Activated B cell treated with CpG ODN at 0.5 μM for 24 hours (primary cell): ENCODE measurements at regions of chr12 and their contacts with region 1.

Region 1: DNA sequence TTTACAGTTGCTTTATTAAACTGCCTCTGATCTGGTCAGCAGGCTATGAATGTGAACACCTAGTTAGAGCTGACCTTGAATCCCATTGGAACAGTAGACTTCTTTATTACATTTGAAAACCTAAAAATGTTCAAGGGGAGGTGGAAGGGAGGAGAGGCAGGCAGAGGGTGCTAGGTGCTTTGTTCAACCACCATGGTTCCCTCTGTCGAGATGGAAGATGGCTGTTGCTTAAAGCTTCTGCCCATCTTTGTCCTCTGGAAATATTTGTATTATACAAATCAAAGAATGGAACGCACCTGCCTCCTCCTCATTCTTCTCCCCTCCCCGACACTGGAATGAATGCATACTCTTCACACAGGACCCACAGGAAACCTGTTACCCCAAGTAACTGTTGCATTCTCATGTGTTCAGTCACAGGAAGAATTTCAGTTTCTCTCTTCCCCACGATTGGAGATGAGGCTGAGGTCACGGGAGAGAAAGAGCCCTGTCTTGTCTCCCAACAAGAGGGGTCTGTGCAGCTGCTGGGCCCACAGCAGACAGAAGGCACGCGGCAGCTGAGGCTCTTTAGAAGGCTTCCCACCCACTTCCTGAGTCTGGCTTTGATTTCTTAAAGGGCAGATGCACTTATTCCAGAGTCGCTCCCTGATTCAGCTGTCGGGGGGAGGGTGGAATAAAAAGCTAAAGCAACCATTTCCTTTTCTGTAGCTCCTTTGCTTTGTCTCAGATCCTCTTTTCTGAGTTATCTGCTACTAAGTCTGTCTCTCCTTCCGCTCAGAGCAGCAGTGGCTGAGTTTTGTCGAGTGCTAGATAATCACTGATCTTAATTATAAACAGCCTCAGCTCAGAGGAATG is 217.9 kb upstream of the BTG1 start:
- DNase-seq: peak; percentile 50
- ATAC-seq: peak; percentile 75
- H3K4me3 Mint-ChIP-seq: peak overlapping the region; percentile 88
- H3K27ac Mint-ChIP-seq: peak overlapping the region; percentile 98
- H3K4me1 Mint-ChIP-seq: peaks cover 76% of the 10 kb centered on the region
- H3K27me3 Mint-ChIP-seq: no peaks in the 10 kb centered on the region
- CTCF ChIP-seq: no peak

Region 2: DNA sequence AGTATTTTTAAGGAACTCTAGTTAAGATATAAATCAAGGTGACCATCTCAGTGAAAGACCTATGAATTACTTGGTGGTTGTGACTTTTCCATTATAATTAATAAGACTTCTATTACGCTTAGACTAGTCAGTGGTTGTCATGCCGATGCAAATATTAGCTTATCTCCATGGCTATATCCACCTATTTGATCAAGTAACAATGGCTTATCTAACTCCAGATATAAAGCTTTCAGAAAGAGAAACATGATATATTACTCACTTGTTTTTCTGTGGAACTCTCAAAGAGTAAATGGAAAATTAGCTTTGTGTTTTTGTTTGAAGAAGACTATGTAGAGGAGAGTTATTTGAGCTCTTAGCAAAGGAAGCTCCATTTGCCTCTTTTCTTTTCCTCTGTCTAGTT is 857.1 kb before region 1 on chr12:
- CTCF ChIA-PET with region 1: no interaction called
- POLR2A ChIA-PET with region 1: no interaction called
- intact Hi-C with region 1: no loop called
- DNase-seq: no peak
- ATAC-seq: no peak
- H3K4me3 Mint-ChIP-seq: no peak overlapping the region
- H3K27ac Mint-ChIP-seq: no peak overlapping the region
- H3K4me1 Mint-ChIP-seq: no peaks in the 10 kb centered on the region
- H3K27me3 Mint-ChIP-seq: peaks cover 3% of the 10 kb centered on the region
- CTCF ChIP-seq: no peak

Region 3: DNA sequence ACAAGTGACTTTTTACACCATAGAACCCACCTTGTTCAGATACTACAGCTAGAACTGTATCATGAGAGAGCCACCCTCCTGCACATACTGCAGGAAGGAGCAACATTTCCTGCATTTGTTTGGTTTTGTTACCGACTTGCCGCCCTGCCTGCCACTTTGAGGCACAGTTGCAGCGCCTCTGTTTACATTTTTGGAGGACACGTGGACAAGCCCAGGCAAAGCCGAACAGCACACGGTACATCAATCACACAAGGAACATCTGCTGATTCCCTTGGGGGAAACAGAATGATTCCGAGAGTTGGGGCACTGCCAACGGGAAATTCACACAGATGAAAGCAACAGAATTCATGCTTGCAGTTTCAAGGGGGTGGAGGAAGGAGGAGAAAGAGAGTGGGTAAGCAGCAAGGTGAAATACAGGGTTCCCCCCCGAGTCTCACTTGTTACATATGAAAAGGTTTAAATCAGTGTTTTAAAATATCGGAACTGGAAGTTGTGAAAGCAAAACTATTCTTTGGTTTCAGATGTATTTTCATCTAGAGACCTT is 328.6 kb before region 1 on chr12:
- CTCF ChIA-PET with region 1: no interaction called
- POLR2A ChIA-PET with region 1: no interaction called
- intact Hi-C with region 1: loop called (anchors 1 kb)
- DNase-seq: peak; percentile 50
- ATAC-seq: peak; percentile 91
- H3K4me3 Mint-ChIP-seq: peak overlapping the region; percentile 67
- H3K27ac Mint-ChIP-seq: peak overlapping the region; percentile 86
- H3K4me1 Mint-ChIP-seq: peaks cover 65% of the 10 kb centered on the region
- H3K27me3 Mint-ChIP-seq: no peaks in the 10 kb centered on the region
- CTCF ChIP-seq: no peak

Region 4: GRCh38 chr12:92170050-92170449 is 193.5 kb before region 1 on chr12:
- CTCF ChIA-PET with region 1: interaction called, 6 read pairs
- POLR2A ChIA-PET with region 1: interaction called, 106 read pairs
- intact Hi-C with region 1: loop called (anchors 1 kb)
- DNase-seq: no peak
- ATAC-seq: no peak
- H3K4me3 Mint-ChIP-seq: peak overlapping the region; percentile 6
- H3K27ac Mint-ChIP-seq: peak overlapping the region; percentile 74
- H3K4me1 Mint-ChIP-seq: peaks cover 72% of the 10 kb centered on the region
- H3K27me3 Mint-ChIP-seq: no peaks in the 10 kb centered on the region
- CTCF ChIP-seq: no peak

Region 5: DNA sequence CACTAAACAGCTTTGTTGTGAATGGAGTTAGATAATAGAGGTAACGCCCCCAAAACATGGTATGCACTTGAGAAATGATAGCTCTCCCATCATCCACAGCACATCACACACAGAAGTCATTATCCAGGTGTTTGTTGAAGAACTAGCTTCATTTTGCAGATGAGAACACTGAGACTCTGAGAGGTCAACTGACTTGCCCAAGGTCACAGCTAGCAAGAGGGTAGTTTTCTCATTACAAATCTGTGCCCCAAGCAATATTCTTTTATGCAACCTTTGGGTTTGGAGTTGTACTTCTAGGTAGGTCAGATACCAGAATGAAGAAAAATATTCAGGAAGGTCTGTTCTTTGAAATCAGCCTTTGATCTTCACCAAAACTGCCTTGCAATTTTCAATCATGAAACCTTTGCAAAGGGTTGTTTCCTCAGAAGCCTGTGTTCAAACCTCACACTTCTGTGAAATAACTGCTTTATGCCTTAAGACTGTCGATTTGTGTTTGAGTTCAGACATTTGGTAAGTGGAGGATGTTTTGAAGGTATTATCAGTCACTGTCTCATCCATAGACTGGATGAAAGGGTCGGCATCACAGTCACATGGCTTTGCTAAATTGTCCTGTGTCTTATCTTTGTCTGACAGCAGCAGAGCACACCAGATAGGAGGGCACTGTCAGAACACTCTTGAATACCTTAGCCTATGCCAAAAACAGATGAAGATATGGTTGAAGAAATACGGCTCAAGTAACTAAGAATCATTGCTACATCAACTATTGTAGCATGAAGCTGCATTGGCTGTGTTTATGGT is 15.4 kb after region 1 on chr12:
- CTCF ChIA-PET with region 1: no interaction called
- POLR2A ChIA-PET with region 1: interaction called, 13 read pairs
- intact Hi-C with region 1: no loop called
- DNase-seq: no peak
- ATAC-seq: no peak
- H3K4me3 Mint-ChIP-seq: no peak overlapping the region
- H3K27ac Mint-ChIP-seq: no peak overlapping the region
- H3K4me1 Mint-ChIP-seq: no peaks in the 10 kb centered on the region
- H3K27me3 Mint-ChIP-seq: no peaks in the 10 kb centered on the region
- CTCF ChIP-seq: no peak

Region 6: DNA sequence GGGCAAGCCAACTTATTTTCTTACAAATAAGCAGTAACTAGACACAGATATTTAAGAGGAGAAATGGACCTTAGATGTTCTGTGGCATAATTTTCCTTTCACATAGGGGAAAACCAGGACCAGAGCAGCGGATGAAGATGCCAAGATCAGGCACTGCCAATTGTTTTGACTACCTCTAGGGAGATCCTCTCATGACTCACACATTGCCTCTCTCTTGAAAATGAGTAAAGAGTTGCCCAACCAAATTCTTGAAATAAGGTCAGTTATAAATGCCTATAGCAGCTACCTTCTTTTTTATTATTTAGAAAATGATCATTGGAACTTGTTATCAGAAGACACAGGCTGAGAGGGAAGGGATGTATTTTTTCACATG is 75.9 kb after region 1 on chr12:
- CTCF ChIA-PET with region 1: interaction called, 3 read pairs
- POLR2A ChIA-PET with region 1: interaction called, 6 read pairs
- intact Hi-C with region 1: loop called (anchors 2 kb)
- DNase-seq: no peak
- ATAC-seq: peak; percentile 51
- H3K4me3 Mint-ChIP-seq: peak overlapping the region; percentile 62
- H3K27ac Mint-ChIP-seq: peak overlapping the region; percentile 97
- H3K4me1 Mint-ChIP-seq: peaks cover 99% of the 10 kb centered on the region
- H3K27me3 Mint-ChIP-seq: no peaks in the 10 kb centered on the region
- CTCF ChIP-seq: no peak

Region 7: DNA sequence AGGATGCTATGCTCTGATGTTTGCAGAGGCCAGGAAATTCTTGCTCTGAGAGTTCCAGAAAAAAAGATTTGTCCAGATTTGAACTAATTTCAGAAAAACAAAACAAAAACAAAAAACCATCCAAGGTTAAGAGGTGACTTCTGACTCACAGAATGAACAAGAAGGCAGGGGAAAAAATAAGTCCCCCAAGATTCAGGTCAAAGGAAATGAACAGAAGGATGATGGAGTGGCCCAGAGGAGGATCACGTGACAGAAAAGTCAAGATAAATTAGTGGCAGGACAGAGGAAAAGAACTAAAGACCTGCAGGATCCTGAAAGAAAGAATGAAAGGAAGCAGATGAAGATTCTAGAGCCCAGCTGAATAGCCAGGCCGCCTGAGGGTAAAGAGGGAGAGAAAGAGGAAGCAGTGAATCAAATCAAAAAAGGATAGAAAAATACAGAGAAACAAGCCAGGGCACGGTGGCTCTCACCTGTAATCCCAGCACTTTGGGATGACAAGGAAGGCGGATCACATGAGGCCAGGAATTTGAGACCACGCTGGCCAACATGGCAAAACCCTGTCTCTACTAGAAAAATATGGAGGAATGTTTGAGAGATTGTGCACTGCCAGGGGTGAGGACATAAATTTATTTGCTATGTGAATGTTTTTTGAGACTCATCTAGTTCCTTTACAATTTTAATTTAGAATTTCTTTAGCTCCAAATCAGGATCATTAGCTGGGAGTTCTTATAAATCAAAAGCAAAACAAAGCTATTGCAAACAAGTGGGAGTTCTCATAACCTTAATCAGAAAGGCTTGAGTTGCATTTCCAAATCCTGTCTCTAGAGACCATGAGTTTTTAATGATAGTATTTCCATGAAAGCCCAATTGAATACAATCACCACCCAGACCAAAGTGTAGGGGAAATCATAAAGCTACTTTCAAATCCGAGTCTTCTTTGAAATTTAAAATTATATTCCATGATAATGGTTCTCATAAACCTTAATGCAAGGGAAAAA is 122.1 kb after region 1 on chr12:
- CTCF ChIA-PET with region 1: no interaction called
- POLR2A ChIA-PET with region 1: interaction called, 4 read pairs
- intact Hi-C with region 1: loop called (anchors 5 kb)
- DNase-seq: no peak
- ATAC-seq: peak; percentile 41
- H3K4me3 Mint-ChIP-seq: peak overlapping the region; percentile 50
- H3K27ac Mint-ChIP-seq: peak overlapping the region; percentile 85
- H3K4me1 Mint-ChIP-seq: peaks cover 88% of the 10 kb centered on the region
- H3K27me3 Mint-ChIP-seq: no peaks in the 10 kb centered on the region
- CTCF ChIP-seq: no peak

Region 8: DNA sequence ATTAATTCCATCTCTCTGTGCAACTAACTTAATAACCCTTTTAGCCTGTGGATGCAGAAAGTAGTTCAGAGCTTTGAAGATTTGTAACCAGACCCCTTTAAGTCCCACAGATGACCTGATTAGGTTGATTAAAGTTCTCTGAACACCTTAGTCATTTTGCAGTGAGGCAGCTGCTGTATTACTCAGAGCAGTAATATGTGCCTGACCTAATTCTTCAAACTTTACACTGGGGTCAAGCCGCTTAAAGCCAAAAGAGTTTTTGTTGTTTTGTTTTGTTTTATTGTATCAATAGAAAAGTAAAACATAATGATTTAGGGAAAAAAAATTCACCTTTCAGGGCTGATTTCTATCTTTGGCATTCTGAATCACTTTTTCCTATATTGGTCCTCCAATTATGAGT is 260.7 kb after region 1 on chr12:
- CTCF ChIA-PET with region 1: no interaction called
- POLR2A ChIA-PET with region 1: no interaction called
- intact Hi-C with region 1: no loop called
- DNase-seq: no peak
- ATAC-seq: no peak
- H3K4me3 Mint-ChIP-seq: no peak overlapping the region
- H3K27ac Mint-ChIP-seq: no peak overlapping the region
- H3K4me1 Mint-ChIP-seq: no peaks in the 10 kb centered on the region
- H3K27me3 Mint-ChIP-seq: peaks cover 2% of the 10 kb centered on the region
- CTCF ChIP-seq: no peak

Region 9: GRCh38 chr12:93569656-93570551 is 1206.4 kb after region 1 on chr12:
- CTCF ChIA-PET with region 1: no interaction called
- POLR2A ChIA-PET with region 1: no interaction called
- intact Hi-C with region 1: loop called (anchors 5 kb)
- DNase-seq: peak; percentile 60
- ATAC-seq: peak; percentile 42
- H3K4me3 Mint-ChIP-seq: peak overlapping the region; percentile 88
- H3K27ac Mint-ChIP-seq: no peak overlapping the region
- H3K4me1 Mint-ChIP-seq: peaks cover 17% of the 10 kb centered on the region
- H3K27me3 Mint-ChIP-seq: peaks cover 26% of the 10 kb centered on the region
- CTCF ChIP-seq: no peak